ENCODE measurements at regions of chr10 and their contacts with region 1.

Region 1: GRCh38 chr10:84360637-84361365 is 32.4 kb downstream of the CCSER2 start:
- DNase-seq: no peak
- H3K4me3 Mint-ChIP-seq: no peak overlapping the region
- H3K27ac Mint-ChIP-seq: no peak overlapping the region
- H3K4me1 Mint-ChIP-seq: peaks cover 79% of the 10 kb centered on the region
- H3K27me3 Mint-ChIP-seq: no peaks in the 10 kb centered on the region

Region 2: GRCh38 chr10:84341538-84341856 is 19.3 kb before region 1 on chr10:
- CTCF ChIA-PET with region 1: no interaction called
- POLR2A ChIA-PET with region 1: interaction called, 3 read pairs
- intact Hi-C with region 1: loop called (anchors 2 kb)
- DNase-seq: peak; percentile 43
- H3K4me3 Mint-ChIP-seq: no peak overlapping the region
- H3K27ac Mint-ChIP-seq: no peak overlapping the region
- H3K4me1 Mint-ChIP-seq: peaks cover 50% of the 10 kb centered on the region
- H3K27me3 Mint-ChIP-seq: no peaks in the 10 kb centered on the region